ENCODE measurements at regions of chr19 and their contacts with region 1.

Region 1: GRCh38 chr19:19138169-19138981 is at the start of gene TMEM161A:
- DNase-seq: peak; percentile 98
- ATAC-seq: peak; percentile 100
- H3K4me3 ChIP-seq: peak within 1 kb of the TSS; percentile 77
- H3K27ac ChIP-seq: peak within 1 kb of the TSS; percentile 76
- H3K4me1 ChIP-seq: peaks cover 6% of the 10 kb centered on the region; the same call in 1 of the 2 replicates
- H3K27me3 ChIP-seq: no peaks in the 10 kb centered on the region
- CTCF ChIP-seq: no peak
- EP300 ChIP-seq: no peak
- POLR2A ChIP-seq: peak; percentile 90
- RAD21 ChIP-seq: no peak
- polyA plus RNA-seq, gene TMEM161A: 1.1 to 2.0 TPM

Region 2: DNA sequence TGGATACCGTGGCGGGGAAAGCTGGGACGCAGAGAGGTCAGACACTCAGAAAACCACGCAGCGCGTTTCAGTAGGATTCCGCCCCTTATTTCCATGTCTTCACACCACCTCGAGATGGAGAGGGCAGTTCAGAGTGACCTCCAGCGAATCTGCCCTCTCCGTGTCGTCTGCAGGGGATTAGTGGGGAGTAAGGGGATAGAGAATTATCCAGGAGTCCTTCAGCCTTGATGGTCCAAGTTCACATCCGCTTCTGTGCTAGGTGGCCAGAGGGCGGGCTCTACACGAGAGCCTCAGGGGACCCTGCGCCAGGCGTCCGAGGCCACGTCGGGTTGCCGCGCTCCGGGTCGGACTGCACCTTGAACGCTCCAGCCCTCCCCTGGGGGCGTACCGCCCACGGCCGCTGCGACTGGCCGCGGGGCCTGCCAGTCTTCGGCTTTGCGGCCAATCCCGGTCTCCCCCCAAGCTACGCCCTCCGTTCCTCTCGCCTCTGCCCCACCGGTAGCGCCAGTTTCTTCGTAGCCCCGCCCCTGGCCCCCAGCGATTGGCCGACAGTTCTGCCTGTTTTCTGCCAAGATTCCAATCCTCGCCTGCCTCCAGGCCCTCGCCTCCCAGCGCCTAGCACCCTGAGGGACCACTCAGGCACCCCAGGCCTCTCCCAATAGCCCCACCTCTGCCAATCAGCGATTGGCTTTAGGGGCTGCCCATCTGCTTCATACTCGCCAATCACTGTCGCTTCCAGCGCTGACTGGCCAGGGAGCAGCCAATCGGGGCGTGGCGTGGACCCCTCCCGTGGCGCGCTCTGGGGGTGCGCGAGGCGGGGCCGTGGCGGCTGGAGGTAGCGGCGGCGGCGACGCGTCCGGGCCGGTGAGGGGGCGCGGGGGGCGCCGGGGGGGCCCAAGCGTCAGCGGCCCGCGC is 74.9 kb before region 1 on chr19 and contains the start of gene SLC25A42:
- CTCF ChIA-PET with region 1: interaction called, 6 read pairs
- POLR2A ChIA-PET with region 1: no interaction called
- RAD21 ChIA-PET with region 1: no interaction called
- SMC1A ChIA-PET with region 1: no interaction called
- in situ Hi-C with region 1: loop called (anchors 5 kb)
- intact Hi-C with region 1: no loop called
- DNase-seq: peak; percentile 99
- ATAC-seq: peak; percentile 97
- H3K4me3 ChIP-seq: peak within 1 kb of the TSS; percentile 95
- H3K27ac ChIP-seq: peak within 1 kb of the TSS; percentile 89
- H3K4me1 ChIP-seq: peaks cover 17% of the 10 kb centered on the region
- H3K27me3 ChIP-seq: no peaks in the 10 kb centered on the region
- CTCF ChIP-seq: no peak
- EP300 ChIP-seq: no peak
- POLR2A ChIP-seq: peak; percentile 73
- RAD21 ChIP-seq: no peak
- polyA plus RNA-seq, gene SLC25A42: 0.24 to 1.5 TPM

Region 3: GRCh38 chr19:19259741-19260140 is 121.4 kb after region 1 on chr19:
- CTCF ChIA-PET with region 1: no interaction called
- POLR2A ChIA-PET with region 1: no interaction called
- RAD21 ChIA-PET with region 1: no interaction called
- SMC1A ChIA-PET with region 1: no interaction called
- in situ Hi-C with region 1: no loop called
- intact Hi-C with region 1: no loop called
- DNase-seq: no peak
- ATAC-seq: 0 out of 3 replicates have a peak, but pooled peaks have one; percentile 52
- H3K4me3 ChIP-seq: no peak overlapping the region
- H3K27ac ChIP-seq: no peak overlapping the region
- H3K4me1 ChIP-seq: no peaks in the 10 kb centered on the region
- H3K27me3 ChIP-seq: peaks cover 0 to 2% of the 10 kb centered on the region in 2 experiments; a peak in 1 of 4 replicates
- CTCF ChIP-seq: no peak
- EP300 ChIP-seq: no peak
- POLR2A ChIP-seq: no peak
- RAD21 ChIP-seq: no peak

Measured in GM12878 (cell line).